Left colon (tissue), 2 donors: ENCODE measurements at regions of chr10 and their contacts with region 1.

Region 1: GRCh38 chr10:112183329-112184051 is at the start of gene GPAM:
- DNase-seq: peak; percentile 90 to 98
- ATAC-seq: peak; percentile 96
- total RNA-seq, gene GPAM: 8.6 to 10.9 TPM

Region 2: DNA sequence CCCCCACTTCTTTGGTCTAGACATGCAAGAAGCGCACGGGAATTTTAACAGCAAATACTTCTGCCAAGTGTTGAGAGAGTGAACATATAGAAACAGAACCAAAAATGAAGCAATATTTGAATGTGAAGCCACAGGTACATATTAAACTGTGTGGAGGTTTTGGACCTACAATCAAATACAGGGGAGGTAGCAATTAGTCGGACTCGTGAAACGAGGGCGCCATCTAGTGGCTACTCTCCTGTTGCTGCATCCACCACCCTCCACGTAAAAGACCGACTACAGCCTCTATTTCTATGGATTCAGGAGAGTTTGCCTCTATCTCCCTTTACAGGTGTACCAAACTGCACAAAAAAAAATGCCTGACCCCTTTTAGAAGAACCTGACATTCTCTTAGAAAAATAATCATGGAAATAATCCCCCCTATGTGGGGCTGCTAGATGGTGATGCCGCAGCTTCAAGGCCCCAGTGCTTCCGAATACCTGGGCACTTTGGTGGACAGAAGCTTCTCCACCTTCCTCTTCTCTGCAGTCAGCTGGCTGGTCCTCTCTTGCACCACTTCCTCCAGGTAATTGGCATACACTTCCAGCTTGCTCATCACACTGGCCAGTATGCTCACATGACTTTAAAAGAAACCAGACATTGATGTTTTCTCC is 131.5 kb after region 1 on chr10:
- intact Hi-C with region 1: loop called in 1 of 2 experiments (anchors 10 kb)
- DNase-seq: peak; percentile 66 to 90
- ATAC-seq: peak; percentile 91